ENCODE measurements at regions of chr9 and their contacts with region 1.

Region 1: GRCh38 chr9:134455934-134456739 is 129.9 kb downstream of the RXRA start:
- DNase-seq: peak; percentile 50 to 92 (median 70)
- ATAC-seq: peak; percentile 92
- H3K4me3 ChIP-seq: peak overlapping the region; percentile 59
- H3K4me3 Mint-ChIP-seq: peak overlapping the region; percentile 78
- H3K27ac ChIP-seq: peak overlapping the region; percentile 68 to 93
- H3K27ac Mint-ChIP-seq: peak overlapping the region; percentile 91
- H3K4me1 ChIP-seq: peaks cover 26% of the 10 kb centered on the region
- H3K4me1 Mint-ChIP-seq: peaks cover 7% of the 10 kb centered on the region
- H3K27me3 ChIP-seq: no peaks in the 10 kb centered on the region
- H3K27me3 Mint-ChIP-seq: no peaks in the 10 kb centered on the region
- CTCF ChIP-seq: no peak

Region 2: DNA sequence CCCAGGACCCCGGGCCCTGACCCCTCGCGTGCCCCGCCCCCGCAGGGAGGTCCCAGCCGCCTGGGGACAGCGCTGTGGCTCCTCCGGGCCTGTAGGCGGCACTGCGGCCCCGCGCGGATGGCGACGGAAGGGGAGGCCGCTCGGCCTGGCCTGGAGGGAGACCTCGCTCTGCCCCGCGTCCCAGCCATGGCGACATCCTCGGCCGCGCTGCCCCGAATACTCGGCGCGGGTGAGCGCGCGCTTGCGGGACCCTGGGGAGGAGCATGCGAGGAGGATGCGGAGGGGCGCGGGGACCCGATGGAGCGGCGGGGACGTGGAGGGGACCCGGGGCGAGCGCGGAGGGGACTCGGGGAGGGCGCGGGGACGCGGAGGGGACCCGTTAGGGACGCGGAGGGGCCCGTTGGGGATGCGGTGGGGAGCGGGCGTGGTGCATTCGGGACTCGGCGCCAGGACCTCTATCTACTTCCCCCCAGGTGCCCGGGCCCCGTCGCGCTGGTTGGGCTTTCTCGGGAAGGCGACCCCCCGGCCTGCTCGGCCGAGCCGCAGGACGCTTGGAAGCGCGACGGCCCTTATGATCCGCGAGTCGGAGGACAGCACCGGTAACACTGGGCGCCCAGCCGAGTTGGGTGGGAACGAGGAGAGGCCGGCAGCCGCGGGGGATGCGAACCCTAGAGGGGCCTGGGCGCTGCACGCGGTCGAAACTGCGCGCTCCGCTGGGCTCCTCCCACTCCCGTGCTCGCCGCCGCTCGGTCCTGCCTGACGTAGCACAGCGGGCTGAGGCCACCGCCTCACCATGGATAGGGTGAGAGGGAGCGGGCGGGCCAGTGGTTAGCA is 1044.6 kb after region 1 on chr9 and contains the start of gene MRPS2:
- CTCF ChIA-PET with region 1: no interaction called
- POLR2A ChIA-PET with region 1: no interaction called
- intact Hi-C with region 1: loop called in 1 of 2 experiments (anchors 5 kb)
- DNase-seq: peak; percentile 65 to 91 (median 82)
- ATAC-seq: peak; percentile 91
- H3K4me3 ChIP-seq: peak within 1 kb of the TSS; percentile 97
- H3K4me3 Mint-ChIP-seq: peak within 1 kb of the TSS; percentile 97
- H3K27ac ChIP-seq: peak within 1 kb of the TSS in 1 of 2 donors; percentile 41
- H3K27ac Mint-ChIP-seq: peak within 1 kb of the TSS; percentile 76
- H3K4me1 ChIP-seq: peaks cover 46% of the 10 kb centered on the region
- H3K4me1 Mint-ChIP-seq: peaks cover 24% of the 10 kb centered on the region
- H3K27me3 ChIP-seq: no peaks in the 10 kb centered on the region
- H3K27me3 Mint-ChIP-seq: no peaks in the 10 kb centered on the region
- CTCF ChIP-seq: peak; percentile 83
- total RNA-seq, gene MRPS2: 20.8 to 23.2 TPM